Activated CD4-positive, alpha-beta memory T cell treated with anti-CD3 and anti-CD28 coated beads for 36 hours (primary cell): ENCODE measurements at regions of chr15 and their contacts with region 1.

Region 1: GRCh38 chr15:40807028-40807887 is at the starts of genes DNAJC17 and ZFYVE19:
- DNase-seq: peak; percentile 97
- H3K4me3 Mint-ChIP-seq: peak within 1 kb of the TSS; percentile 97
- H3K27ac Mint-ChIP-seq: peak within 1 kb of the TSS; percentile 98
- H3K4me1 Mint-ChIP-seq: peaks cover 21% of the 10 kb centered on the region
- H3K27me3 Mint-ChIP-seq: no peaks in the 10 kb centered on the region
- total RNA-seq, gene DNAJC17: 32.5 to 34.5 TPM
- total RNA-seq, gene ZFYVE19: 22.8 to 26.1 TPM

Region 2: DNA sequence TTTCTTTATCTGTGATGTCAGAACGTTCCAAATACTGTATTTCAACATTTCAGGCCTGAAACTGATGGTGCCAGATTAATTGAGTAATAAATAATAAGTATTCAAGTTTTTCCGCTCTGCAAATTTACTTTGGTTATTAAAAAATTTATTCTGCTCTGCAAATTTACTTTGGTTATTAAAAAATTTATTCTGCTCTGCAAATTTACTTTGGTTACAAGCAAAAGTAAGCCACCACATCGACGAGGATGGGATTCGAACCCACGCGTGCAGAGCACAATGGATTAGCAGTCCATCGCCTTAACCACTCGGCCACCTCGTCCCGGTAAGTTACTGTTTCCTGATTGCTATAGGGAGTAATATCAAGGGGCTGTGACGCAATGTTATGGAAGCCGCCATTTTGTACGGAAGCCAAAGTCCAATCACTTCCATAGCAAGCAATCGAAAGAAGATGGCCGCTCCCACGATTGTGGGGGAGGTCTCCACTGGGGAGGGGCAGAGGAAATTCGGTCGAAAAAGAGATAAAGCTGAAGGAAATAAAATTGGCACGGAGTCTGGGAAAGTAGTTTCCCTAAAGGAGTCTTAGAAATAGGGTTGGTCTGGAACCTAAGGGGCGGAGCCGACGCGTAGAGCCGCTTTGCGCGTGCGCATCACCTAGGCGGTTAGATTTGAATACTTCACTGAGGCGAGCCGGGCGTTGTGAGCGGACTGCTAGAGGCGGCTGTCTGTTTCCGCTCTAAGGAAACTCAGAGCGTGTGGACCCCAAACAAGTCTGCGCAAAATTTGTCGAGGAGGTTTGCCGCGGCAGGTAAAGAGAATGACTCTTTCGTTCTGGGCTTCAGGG is 213.4 kb before region 1 on chr15 and contains the start of gene KNL1:
- CTCF ChIA-PET with region 1: no interaction called
- POLR2A ChIA-PET with region 1: no interaction called
- intact Hi-C with region 1: loop called (anchors 1 kb)
- DNase-seq: peak; percentile 95
- H3K4me3 Mint-ChIP-seq: peak within 1 kb of the TSS; percentile 98
- H3K27ac Mint-ChIP-seq: peak within 1 kb of the TSS; percentile 99
- H3K4me1 Mint-ChIP-seq: peaks cover 26% of the 10 kb centered on the region
- H3K27me3 Mint-ChIP-seq: peaks cover 10% of the 10 kb centered on the region
- total RNA-seq, gene KNL1: 32.8 to 33.1 TPM

Region 3: GRCh38 chr15:40754883-40755811 is 52.1 kb before region 1 on chr15 and contains the start of gene RMDN3:
- CTCF ChIA-PET with region 1: no interaction called
- POLR2A ChIA-PET with region 1: no interaction called
- intact Hi-C with region 1: loop called (anchors 2 kb)
- DNase-seq: peak; percentile 96
- H3K4me3 Mint-ChIP-seq: peak within 1 kb of the TSS; percentile 90
- H3K27ac Mint-ChIP-seq: peak within 1 kb of the TSS; percentile 94
- H3K4me1 Mint-ChIP-seq: peaks cover 28% of the 10 kb centered on the region
- H3K27me3 Mint-ChIP-seq: no peaks in the 10 kb centered on the region
- total RNA-seq, gene RMDN3: 22.6 to 22.7 TPM

Region 4: DNA sequence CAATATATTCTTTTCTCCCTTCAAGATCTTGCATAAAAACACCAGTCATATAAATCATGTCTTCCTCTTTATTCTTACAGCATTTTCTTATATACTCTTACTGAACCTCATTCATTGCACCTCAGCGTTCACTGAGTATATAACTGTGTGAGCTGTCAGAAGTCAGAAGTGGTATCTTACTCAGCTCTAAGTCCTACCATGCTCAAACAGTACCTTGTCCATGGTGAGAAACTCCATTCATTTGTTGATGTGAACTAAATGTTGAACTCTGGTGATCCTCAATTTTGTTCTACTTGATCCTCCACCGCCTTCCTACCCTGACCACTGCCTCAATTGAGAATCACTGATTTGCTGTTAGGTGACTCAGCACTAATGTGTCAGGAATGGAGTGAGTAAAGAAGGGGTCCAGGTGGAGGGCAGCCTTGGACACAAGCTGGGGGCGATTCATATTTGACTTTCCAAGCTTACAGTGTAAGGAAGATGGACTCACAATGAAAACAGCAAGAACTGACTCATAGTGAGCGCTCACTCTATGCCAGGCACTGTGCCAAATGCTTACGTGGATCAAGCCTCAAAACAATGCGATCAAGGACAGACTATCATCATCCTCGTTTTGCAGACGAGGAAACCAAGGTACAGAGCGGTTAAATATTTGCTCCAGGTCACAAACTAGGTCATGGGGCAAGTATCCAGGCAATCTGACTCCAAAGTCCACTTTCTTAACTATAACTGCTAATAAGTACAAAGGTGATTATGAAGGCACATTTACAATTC is 13.9 kb before region 1 on chr15:
- CTCF ChIA-PET with region 1: interaction called, 8 read pairs
- POLR2A ChIA-PET with region 1: interaction called, 3 read pairs
- intact Hi-C with region 1: loop called (anchors 1 kb)
- DNase-seq: peak; percentile 79
- H3K4me3 Mint-ChIP-seq: no peak overlapping the region
- H3K27ac Mint-ChIP-seq: no peak overlapping the region
- H3K4me1 Mint-ChIP-seq: peaks cover 30% of the 10 kb centered on the region
- H3K27me3 Mint-ChIP-seq: no peaks in the 10 kb centered on the region

Region 5: DNA sequence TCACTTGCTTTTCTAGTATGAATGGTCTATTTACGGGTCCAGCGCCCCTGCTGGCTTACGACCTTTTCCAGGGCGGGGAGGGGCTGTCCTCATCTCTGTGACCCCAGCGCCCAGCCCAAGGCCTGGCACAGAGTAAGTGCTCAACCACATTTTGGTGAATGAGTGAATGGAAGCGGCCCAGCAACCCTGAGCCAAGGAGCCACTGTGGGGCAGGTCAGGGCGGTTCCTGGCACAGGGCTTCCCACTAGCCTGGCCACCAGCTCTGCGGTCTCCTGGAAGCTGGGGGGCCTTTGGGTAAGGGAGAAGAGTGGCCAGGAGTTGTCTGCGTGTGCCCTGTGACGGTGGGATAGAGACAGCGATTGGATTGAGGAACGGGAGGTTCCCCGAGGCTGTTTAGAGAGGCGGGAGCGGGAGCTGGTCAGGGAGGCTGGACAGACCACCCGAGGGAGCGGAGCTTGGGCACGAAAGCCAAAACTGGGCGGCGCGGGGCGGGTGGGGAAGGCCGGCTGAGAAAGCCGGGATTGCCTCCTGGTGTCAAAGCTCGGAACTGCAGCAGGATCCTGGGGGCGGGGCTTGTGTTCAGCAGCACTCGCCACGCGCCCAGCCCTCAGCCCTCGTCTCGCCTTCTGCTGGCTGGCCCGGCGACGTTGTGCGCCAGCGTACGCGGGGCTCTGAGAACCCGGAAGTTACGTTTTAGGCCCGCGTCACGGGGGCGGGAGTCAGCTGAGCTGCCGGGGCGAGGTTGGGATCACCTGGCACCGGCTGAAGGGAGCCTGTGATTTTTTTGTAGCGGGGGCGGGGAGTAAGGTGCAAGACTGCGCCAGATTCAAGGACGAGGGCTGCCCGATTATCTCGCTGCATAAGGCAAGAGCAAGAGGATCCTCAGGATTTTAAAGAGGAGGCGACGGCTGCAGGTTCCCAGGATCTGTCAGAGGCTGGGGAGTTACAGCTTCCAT is 86.8 kb after region 1 on chr15 and contains the start of gene VPS18:
- CTCF ChIA-PET with region 1: interaction called, 16 read pairs
- POLR2A ChIA-PET with region 1: no interaction called
- intact Hi-C with region 1: loop called (anchors 2 kb)
- DNase-seq: peak; percentile 99
- H3K4me3 Mint-ChIP-seq: peak within 1 kb of the TSS; percentile 99
- H3K27ac Mint-ChIP-seq: peak within 1 kb of the TSS; percentile 86
- H3K4me1 Mint-ChIP-seq: peaks cover 27% of the 10 kb centered on the region
- H3K27me3 Mint-ChIP-seq: no peaks in the 10 kb centered on the region
- total RNA-seq, gene VPS18: 7.8 to 8.8 TPM

Region 6: DNA sequence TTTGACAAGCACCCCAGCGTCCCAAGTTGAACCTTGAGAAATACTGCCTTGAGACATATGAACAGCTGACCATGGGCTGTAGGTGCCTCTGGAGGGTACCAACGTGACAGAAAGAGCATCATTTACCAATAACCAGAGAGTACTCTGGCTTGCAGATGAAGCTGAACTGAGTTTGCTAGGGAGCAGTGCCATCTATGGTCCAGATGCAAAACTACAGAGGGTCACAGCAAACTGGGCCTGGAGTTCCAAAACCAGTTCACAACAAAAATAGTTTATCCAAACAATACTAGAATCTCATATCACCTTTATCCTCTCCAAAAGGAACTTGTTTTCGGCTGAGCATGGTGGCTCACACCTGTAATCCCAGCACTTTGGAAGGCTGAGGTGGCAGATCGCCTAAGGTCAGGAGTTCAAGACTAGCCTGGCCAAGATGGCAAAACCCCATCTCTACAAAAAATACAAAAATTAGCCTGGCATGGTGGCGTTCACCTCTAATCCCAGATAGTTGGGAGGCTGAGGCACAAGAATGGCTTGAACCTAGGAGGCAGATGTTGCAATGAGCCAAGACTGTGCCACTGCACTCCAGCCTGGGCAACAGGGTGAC is 215.3 kb after region 1 on chr15:
- CTCF ChIA-PET with region 1: no interaction called
- POLR2A ChIA-PET with region 1: no interaction called
- intact Hi-C with region 1: no loop called
- DNase-seq: peak; percentile 49
- H3K4me3 Mint-ChIP-seq: no peak overlapping the region
- H3K27ac Mint-ChIP-seq: no peak overlapping the region
- H3K4me1 Mint-ChIP-seq: no peaks in the 10 kb centered on the region
- H3K27me3 Mint-ChIP-seq: no peaks in the 10 kb centered on the region